ENCODE measurements at regions of chr20 and their contacts with region 1.

Region 1: DNA sequence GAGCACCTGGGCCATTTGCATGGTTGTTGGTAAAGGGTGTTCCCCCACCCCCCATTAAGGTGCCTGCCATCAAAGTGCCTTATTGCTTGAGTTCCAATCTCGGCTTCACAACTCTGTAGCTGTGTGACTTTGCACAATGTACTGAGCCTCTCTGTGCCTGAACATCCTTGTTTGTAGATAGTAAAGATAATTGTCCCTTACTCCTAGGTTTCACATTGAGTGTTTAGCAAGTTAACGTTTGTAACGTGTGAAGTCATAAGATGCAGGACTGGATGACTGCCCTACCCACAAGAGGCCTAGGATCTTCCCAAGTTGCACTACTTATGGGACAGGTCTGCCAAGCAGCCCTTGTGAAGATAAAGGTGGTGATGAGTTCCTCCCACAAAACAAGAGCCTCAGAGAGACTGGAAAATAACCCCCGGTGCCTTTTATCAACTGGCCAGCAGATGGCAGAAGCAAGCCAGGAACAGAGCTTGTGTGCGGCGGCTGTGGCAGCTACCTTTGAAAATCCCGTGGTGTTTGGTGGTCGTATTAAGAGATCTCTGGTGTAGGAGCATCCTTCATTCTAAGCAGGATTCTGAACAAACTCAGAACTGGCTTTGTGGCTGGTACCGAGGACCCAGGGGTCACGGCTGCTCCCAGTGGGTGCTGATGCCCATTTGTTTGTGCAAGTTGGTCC is 99.0 kb downstream of the CDH26 start:
- DNase-seq: peak; percentile 38 to 83 (median 54)
- ATAC-seq: peak; percentile 51
- H3K4me3 ChIP-seq: peak overlapping the region; percentile 55
- H3K4me3 Mint-ChIP-seq: peak overlapping the region; percentile 32
- H3K27ac ChIP-seq: peak overlapping the region; percentile 17 to 57
- H3K27ac Mint-ChIP-seq: peak overlapping the region; percentile 89
- H3K4me1 ChIP-seq: peaks cover 50% of the 10 kb centered on the region
- H3K4me1 Mint-ChIP-seq: peaks cover 54% of the 10 kb centered on the region
- H3K27me3 ChIP-seq: no peaks in the 10 kb centered on the region
- H3K27me3 Mint-ChIP-seq: no peaks in the 10 kb centered on the region
- CTCF ChIP-seq: peak; percentile 79

Region 2: GRCh38 chr20:59948828-59949720 is 108.2 kb before region 1 on chr20:
- CTCF ChIA-PET with region 1: no interaction called
- POLR2A ChIA-PET with region 1: no interaction called
- intact Hi-C with region 1: loop called (anchors 2 to 5 kb)
- DNase-seq: peak in 6 of 14 experiments; percentile 25 to 81 (median 63)
- ATAC-seq: peak; percentile 94
- H3K4me3 ChIP-seq: peak overlapping the region; percentile 8
- H3K4me3 Mint-ChIP-seq: peak overlapping the region; percentile 62
- H3K27ac ChIP-seq: peak overlapping the region; percentile 37 to 63
- H3K27ac Mint-ChIP-seq: peak overlapping the region; percentile 86
- H3K4me1 ChIP-seq: no peaks in the 10 kb centered on the region
- H3K4me1 Mint-ChIP-seq: peaks cover 21% of the 10 kb centered on the region
- H3K27me3 ChIP-seq: no peaks in the 10 kb centered on the region
- H3K27me3 Mint-ChIP-seq: no peaks in the 10 kb centered on the region
- CTCF ChIP-seq: peak; percentile 76

Region 3: GRCh38 chr20:60262967-60263603 is 205.8 kb after region 1 on chr20:
- CTCF ChIA-PET with region 1: interaction called, 20 read pairs
- POLR2A ChIA-PET with region 1: no interaction called
- intact Hi-C with region 1: loop called in 1 of 2 experiments (anchors 1 kb)
- DNase-seq: peak; percentile 22 to 74 (median 42)
- ATAC-seq: peak; percentile 52
- H3K4me3 ChIP-seq: no peak overlapping the region
- H3K4me3 Mint-ChIP-seq: no peak overlapping the region
- H3K27ac ChIP-seq: no peak overlapping the region
- H3K27ac Mint-ChIP-seq: no peak overlapping the region
- H3K4me1 ChIP-seq: peaks cover 8% of the 10 kb centered on the region
- H3K4me1 Mint-ChIP-seq: peaks cover 29% of the 10 kb centered on the region
- H3K27me3 ChIP-seq: no peaks in the 10 kb centered on the region
- H3K27me3 Mint-ChIP-seq: no peaks in the 10 kb centered on the region
- CTCF ChIP-seq: peak; percentile 77

Region 4: GRCh38 chr20:61263084-61263695 is 1205.9 kb after region 1 on chr20:
- CTCF ChIA-PET with region 1: no interaction called
- POLR2A ChIA-PET with region 1: no interaction called
- intact Hi-C with region 1: loop called (anchors 2 to 10 kb)
- DNase-seq: peak in 11 of 14 experiments; percentile 1 to 40 (median 6)
- ATAC-seq: no peak
- H3K4me3 ChIP-seq: no peak overlapping the region
- H3K4me3 Mint-ChIP-seq: no peak overlapping the region
- H3K27ac ChIP-seq: no peak overlapping the region
- H3K27ac Mint-ChIP-seq: no peak overlapping the region
- H3K4me1 ChIP-seq: no peaks in the 10 kb centered on the region
- H3K4me1 Mint-ChIP-seq: no peaks in the 10 kb centered on the region
- H3K27me3 ChIP-seq: peaks cover 0 to 7% of the 10 kb centered on the region in 2 experiments
- H3K27me3 Mint-ChIP-seq: peaks cover 48% of the 10 kb centered on the region
- CTCF ChIP-seq: peak; percentile 64

Region 5: DNA sequence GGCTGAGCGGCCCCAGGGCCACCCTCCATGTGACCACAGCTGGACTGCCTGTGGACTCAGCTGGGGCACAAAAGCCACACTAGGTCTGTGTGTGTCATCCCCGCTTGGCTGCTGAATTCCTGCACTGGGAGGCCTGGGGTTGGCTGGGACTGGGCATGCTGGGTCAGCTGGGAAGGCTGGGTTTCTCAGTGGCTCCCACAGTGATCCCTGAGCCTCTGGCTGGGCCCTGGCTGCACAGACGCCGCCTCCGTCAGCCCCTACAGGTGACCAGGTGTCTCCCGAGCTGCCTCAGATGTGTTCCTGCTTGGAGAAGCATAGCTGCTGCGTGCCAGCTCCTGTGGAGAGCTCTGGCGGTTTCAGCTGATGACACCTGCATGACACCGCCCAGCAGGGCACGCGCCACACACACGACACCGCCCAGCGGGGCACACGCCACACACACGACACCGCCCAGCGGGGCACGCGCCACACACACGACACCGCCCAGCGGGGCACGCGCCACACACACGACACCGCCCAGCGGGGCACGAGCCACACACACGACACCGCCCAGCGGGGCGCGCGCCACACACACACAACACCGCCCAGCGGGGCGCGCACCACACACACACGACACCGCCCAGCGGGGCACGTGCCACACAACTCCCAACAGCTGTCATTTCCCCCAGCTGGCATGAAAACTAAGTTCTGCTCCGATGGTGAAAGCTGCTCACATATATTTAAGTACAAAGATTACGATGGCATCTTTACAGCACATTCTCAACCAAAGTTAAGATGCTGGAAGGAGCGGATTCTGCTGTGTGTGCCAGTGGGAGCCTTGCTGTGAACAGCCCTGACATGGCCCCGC is 1919.6 kb after region 1 on chr20:
- CTCF ChIA-PET with region 1: no interaction called
- POLR2A ChIA-PET with region 1: no interaction called
- intact Hi-C with region 1: loop called in 1 of 2 experiments (anchors 5 kb)
- DNase-seq: no peak
- ATAC-seq: no peak
- H3K4me3 ChIP-seq: no peak overlapping the region
- H3K4me3 Mint-ChIP-seq: no peak overlapping the region
- H3K27ac ChIP-seq: no peak overlapping the region
- H3K27ac Mint-ChIP-seq: no peak overlapping the region
- H3K4me1 ChIP-seq: peaks cover 7% of the 10 kb centered on the region
- H3K4me1 Mint-ChIP-seq: peaks cover 8% of the 10 kb centered on the region
- H3K27me3 ChIP-seq: no peaks in the 10 kb centered on the region
- H3K27me3 Mint-ChIP-seq: no peaks in the 10 kb centered on the region
- CTCF ChIP-seq: no peak